ENCODE measurements at regions of chr20 and their contacts with region 1.

Region 1: DNA sequence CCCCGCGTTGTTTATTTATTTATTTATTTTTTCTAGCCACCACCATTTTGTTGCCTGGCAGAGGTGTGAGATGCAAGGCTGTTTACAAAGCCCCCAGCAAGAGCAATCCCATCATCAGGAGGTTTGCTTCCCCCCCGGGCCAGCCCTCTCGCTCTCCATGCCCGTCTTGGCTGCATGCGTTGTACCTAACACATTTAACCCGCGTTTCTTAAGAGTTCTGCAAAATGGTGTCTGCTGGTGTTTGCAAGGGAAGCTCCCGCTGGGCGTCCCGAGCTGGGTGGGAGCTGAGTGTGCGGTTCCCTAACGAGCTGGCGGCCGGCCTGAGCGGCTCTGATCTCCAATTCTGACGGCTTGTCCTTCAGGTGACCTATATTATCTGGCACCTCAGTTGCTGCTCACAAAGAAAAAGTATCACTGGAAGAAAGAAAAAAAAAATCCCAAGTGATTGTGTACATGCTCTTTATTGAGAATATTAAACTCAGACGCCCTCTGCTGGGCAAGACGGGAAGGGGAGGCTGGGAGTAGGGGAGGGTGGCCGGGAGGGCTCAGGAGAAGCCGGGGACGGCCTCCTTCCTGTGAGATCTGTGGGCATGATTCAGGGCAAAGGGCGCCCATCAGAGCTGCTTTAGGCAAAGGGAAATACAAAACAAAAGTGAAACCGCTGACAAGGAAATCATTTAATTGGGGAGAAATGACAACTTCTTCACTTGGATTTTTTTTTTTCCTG is 154.8 kb downstream of the BCAS1 start:
- DNase-seq: peak; percentile 94
- H3K4me3 Mint-ChIP-seq: peak overlapping the region; percentile 76
- H3K27ac Mint-ChIP-seq: peak overlapping the region; percentile 89
- H3K4me1 Mint-ChIP-seq: peaks cover 37% of the 10 kb centered on the region
- H3K27me3 Mint-ChIP-seq: no peaks in the 10 kb centered on the region
- CTCF ChIP-seq: peak; percentile 75

Region 2: DNA sequence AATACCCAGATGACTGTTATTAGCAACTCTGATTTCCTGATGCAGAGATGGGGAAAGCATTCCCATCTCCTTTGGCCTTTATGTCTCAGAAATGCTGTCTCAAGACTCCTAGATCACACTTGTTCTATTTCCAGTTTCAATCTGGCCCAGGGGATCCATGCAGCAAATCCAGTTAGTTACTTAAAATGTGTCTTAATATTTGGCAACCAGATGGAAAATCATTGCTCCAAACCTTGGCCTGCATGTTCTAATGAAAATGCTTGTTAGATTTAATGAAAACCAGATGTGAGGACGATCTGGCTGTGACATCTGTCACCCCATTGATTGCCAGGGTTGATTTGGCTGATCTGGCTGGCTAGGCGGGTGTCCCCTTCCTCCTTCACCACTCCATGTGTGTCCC is 818.2 kb before region 1 on chr20:
- CTCF ChIA-PET with region 1: no interaction called
- POLR2A ChIA-PET with region 1: no interaction called
- intact Hi-C with region 1: no loop called
- DNase-seq: no peak
- H3K4me3 Mint-ChIP-seq: no peak overlapping the region
- H3K27ac Mint-ChIP-seq: no peak overlapping the region
- H3K4me1 Mint-ChIP-seq: peaks cover 28% of the 10 kb centered on the region
- H3K27me3 Mint-ChIP-seq: no peaks in the 10 kb centered on the region
- CTCF ChIP-seq: no peak

Region 3: GRCh38 chr20:53578492-53579222 is 337.0 kb before region 1 on chr20:
- CTCF ChIA-PET with region 1: interaction called, 163 read pairs
- POLR2A ChIA-PET with region 1: interaction called, 104 read pairs
- intact Hi-C with region 1: loop called (anchors 1 kb)
- DNase-seq: peak; percentile 91
- H3K4me3 Mint-ChIP-seq: peak overlapping the region; percentile 54
- H3K27ac Mint-ChIP-seq: peak overlapping the region; percentile 90
- H3K4me1 Mint-ChIP-seq: peaks cover 30% of the 10 kb centered on the region
- H3K27me3 Mint-ChIP-seq: no peaks in the 10 kb centered on the region
- CTCF ChIP-seq: peak; percentile 92

Region 4: DNA sequence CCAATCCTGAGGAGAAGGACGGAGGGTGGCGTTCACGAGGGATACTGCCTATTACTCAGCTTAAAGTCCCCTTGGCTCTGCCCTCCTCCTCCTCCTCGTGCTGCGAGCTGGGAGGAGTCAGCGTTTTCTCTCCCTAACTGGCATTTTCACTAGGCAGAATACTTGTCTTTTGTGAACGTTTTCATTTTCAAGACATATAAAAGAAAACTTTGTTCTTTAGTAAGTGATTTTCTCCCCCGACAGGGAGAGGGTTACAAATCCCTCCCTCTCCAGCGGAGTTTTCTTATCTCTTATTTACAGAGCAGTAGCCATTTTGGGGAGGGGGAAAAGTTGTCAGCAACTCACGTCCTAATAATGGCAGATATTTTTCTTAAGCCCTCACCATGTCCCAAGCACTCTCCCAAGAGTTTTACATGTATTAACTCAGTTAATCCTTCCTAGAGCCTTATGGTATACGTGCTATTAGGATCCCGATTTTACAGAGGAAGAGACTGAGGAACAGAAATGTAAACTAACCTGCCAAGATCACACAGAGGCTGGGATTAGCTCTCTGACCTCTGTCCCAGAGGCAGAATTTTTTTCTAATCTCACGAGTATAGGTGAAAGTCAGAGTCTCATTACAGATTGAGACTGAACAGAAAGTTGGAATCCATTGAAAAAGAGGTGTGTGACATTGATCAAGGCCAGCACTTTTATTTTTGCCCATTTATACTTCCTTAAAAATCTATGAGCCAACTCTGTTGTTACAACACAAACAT is 292.0 kb before region 1 on chr20:
- CTCF ChIA-PET with region 1: interaction called, 35 read pairs
- POLR2A ChIA-PET with region 1: interaction called, 57 read pairs
- intact Hi-C with region 1: loop called (anchors 2 kb)
- DNase-seq: peak; percentile 80
- H3K4me3 Mint-ChIP-seq: peak overlapping the region; percentile 57
- H3K27ac Mint-ChIP-seq: peak overlapping the region; percentile 98
- H3K4me1 Mint-ChIP-seq: peaks cover 18% of the 10 kb centered on the region
- H3K27me3 Mint-ChIP-seq: no peaks in the 10 kb centered on the region
- CTCF ChIP-seq: no peak

Region 5: GRCh38 chr20:53738039-53738944 is 177.3 kb before region 1 on chr20:
- CTCF ChIA-PET with region 1: interaction called, 10 read pairs
- POLR2A ChIA-PET with region 1: interaction called, 4 read pairs
- intact Hi-C with region 1: no loop called
- DNase-seq: no peak
- H3K4me3 Mint-ChIP-seq: no peak overlapping the region
- H3K27ac Mint-ChIP-seq: no peak overlapping the region
- H3K4me1 Mint-ChIP-seq: peaks cover 32% of the 10 kb centered on the region
- H3K27me3 Mint-ChIP-seq: no peaks in the 10 kb centered on the region
- CTCF ChIP-seq: no peak

Region 6: DNA sequence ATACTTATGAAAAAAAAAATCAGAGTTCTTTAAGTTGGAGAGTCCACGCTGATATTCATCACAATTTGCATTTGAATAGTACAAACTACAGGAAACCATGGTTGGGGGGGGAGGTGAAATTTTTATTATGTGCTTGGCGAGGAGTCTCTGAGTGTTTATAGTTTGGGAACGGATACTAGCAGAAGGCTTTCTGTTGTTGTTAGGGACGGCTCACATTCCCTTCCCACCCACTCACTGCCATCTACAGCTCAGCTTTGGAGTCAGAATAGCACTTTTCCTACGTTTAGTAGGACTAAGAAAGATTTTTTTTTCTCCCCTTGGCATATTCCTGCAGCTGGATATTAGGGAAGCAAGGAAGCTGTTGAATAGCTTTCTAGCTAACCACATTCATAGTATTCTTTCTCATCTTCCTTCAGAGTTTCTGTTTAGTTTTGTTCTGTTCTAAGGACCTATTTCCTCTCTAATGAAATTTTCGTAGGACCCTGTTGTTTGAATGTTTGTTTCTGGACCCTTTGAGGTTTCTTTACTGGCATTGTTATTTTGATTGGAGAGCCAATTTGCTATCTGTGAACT is 86.8 kb before region 1 on chr20:
- CTCF ChIA-PET with region 1: interaction called, 12 read pairs
- POLR2A ChIA-PET with region 1: interaction called, 27 read pairs
- intact Hi-C with region 1: loop called (anchors 2 kb)
- DNase-seq: peak; percentile 84
- H3K4me3 Mint-ChIP-seq: peak overlapping the region; percentile 66
- H3K27ac Mint-ChIP-seq: peak overlapping the region; percentile 98
- H3K4me1 Mint-ChIP-seq: peaks cover 37% of the 10 kb centered on the region
- H3K27me3 Mint-ChIP-seq: no peaks in the 10 kb centered on the region
- CTCF ChIP-seq: no peak

Region 7: GRCh38 chr20:53905019-53905847 is 10.4 kb before region 1 on chr20:
- CTCF ChIA-PET with region 1: interaction called, 62 read pairs
- POLR2A ChIA-PET with region 1: interaction called, 39 read pairs
- intact Hi-C with region 1: no loop called
- DNase-seq: no peak
- H3K4me3 Mint-ChIP-seq: no peak overlapping the region
- H3K27ac Mint-ChIP-seq: peak overlapping the region; percentile 93
- H3K4me1 Mint-ChIP-seq: peaks cover 52% of the 10 kb centered on the region
- H3K27me3 Mint-ChIP-seq: no peaks in the 10 kb centered on the region
- CTCF ChIP-seq: no peak

Region 8: DNA sequence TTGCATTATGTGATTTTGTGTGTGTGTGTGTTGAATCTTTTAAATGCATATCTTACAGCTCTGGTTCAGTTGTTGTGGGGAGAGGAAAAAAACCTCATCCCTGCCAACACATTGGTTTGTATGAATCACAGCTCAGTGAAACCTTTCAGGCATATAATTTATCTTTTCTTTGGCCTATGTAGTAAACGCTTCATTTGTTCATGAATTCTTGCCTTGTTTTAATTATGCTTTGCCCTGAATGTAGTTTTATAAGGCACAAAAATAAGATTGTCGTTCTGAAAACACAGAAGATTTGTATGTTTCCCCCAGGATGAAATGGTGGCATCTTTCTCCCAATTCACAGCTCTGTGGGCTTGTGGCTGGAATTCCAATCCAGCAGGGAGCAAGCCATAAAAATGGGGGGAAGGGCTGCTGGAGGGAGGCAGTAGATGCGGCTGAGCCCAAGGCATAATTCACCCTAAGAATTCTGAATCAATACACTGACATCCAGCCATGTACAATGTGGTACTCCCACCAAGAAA is 109.7 kb after region 1 on chr20:
- CTCF ChIA-PET with region 1: no interaction called
- POLR2A ChIA-PET with region 1: no interaction called
- intact Hi-C with region 1: no loop called
- DNase-seq: no peak
- H3K4me3 Mint-ChIP-seq: no peak overlapping the region
- H3K27ac Mint-ChIP-seq: no peak overlapping the region
- H3K4me1 Mint-ChIP-seq: no peaks in the 10 kb centered on the region
- H3K27me3 Mint-ChIP-seq: peaks cover 29% of the 10 kb centered on the region
- CTCF ChIP-seq: no peak

Region 9: GRCh38 chr20:54062812-54063280 is 147.2 kb after region 1 on chr20:
- CTCF ChIA-PET with region 1: interaction called, 79 read pairs
- POLR2A ChIA-PET with region 1: interaction called, 7 read pairs
- intact Hi-C with region 1: no loop called
- DNase-seq: peak; percentile 64
- H3K4me3 Mint-ChIP-seq: no peak overlapping the region
- H3K27ac Mint-ChIP-seq: no peak overlapping the region
- H3K4me1 Mint-ChIP-seq: peaks cover 21% of the 10 kb centered on the region
- H3K27me3 Mint-ChIP-seq: no peaks in the 10 kb centered on the region
- CTCF ChIP-seq: peak; percentile 59

Measured in MCF 10A (cell line).